Uterus (tissue), 4 donors: ENCODE measurements at regions of chr5 and their contacts with region 1.

Region 1: GRCh38 chr5:154754460-154755360 is 467 bp upstream of the LARP1 start:
- DNase-seq: peak; percentile 100
- H3K4me3 ChIP-seq: peak overlapping the region; percentile 83 to 97
- H3K27ac ChIP-seq: peak overlapping the region; percentile 96 to 99
- H3K4me1 ChIP-seq: no peaks in the 10 kb centered on the region
- H3K27me3 ChIP-seq: no peaks in the 10 kb centered on the region
- CTCF ChIP-seq: peak; percentile 20 to 55 (median 39)
- POLR2A ChIP-seq: peak; percentile 84 to 86

Region 2: GRCh38 chr5:154857530-154858296 is 103.0 kb after region 1 on chr5:
- intact Hi-C with region 1: loop called (anchors 5 kb)
- DNase-seq: peak; percentile 97 to 98
- H3K4me3 ChIP-seq: peak overlapping the region; percentile 82 to 90
- H3K27ac ChIP-seq: peak overlapping the region; percentile 98
- H3K4me1 ChIP-seq: peaks cover 4 to 5% of the 10 kb centered on the region in 2 donors
- H3K27me3 ChIP-seq: no peaks in the 10 kb centered on the region
- CTCF ChIP-seq: no peak
- POLR2A ChIP-seq: peak in 1 of 2 donors; percentile 85

Region 3: DNA sequence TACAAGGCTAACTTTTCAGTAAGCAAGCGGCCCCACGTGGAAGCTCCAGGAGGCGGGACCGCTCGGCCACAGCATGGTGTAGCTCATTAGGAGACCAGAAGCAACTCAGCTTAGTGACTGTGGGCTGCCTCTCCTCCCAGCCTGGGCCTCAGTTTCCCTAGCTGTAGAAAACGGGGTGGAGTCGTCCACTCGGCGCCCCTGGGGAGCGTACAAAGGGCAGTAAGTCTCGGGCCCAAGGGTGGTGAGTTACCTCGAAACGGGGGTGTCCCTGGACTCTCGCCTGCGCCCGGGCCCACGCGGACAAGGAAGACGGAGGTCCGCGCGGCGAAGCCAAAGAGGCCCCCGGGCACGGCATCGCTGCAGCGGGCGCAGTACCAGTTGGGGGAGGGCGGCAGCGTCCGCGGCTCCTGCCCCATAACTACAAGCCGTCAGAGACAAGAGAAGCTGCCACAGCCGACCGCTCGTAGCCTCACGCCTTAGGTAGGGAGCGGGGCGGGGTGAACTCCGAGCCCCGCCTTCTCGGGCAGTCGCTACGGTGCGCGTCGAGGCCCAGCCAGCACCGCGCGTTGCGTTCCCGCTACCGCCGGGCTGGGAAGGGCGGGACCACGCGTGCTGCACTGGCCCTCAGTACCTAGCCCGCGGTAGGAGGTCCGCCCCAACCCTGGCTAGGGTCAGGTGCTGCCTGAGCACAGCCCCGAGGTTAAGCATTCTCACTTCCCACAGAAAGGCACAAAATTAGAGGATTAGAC is 183.2 kb after region 1 on chr5 and contains the start of gene GEMIN5:
- intact Hi-C with region 1: loop called (anchors 10 kb)
- DNase-seq: peak; percentile 74 to 85
- H3K4me3 ChIP-seq: peak within 1 kb of the TSS; percentile 49 to 81
- H3K27ac ChIP-seq: peak within 1 kb of the TSS; percentile 48 to 79
- H3K4me1 ChIP-seq: peaks cover 0 to 9% of the 10 kb centered on the region in 2 donors
- H3K27me3 ChIP-seq: no peaks in the 10 kb centered on the region
- CTCF ChIP-seq: peak in 1 of 4 experiments; percentile 5
- POLR2A ChIP-seq: peak in 1 of 2 donors; percentile 54
- total RNA-seq, gene GEMIN5: 10.0 to 26.5 (median 19.3) TPM

Region 4: DNA sequence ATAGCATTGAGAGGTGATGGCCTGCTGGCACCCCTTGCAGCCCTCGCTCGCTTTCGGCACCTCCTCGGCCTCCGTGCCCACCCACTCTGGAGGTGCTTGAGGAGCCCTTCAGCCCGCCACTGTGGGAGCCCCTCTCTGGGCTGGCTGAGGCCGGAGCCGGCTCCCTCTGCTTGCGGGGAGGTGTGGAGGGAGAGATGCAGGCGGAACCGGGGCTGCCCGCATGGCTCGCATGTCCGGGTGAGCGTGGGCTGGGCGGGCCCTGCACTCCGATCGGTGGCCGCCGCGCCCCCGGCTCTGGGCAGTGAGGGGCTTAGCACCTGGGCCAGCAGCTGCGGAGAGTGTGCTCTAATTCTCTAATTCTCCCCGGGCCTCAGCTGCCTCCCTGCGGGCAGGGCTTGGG is 359.9 kb after region 1 on chr5:
- intact Hi-C with region 1: no loop called
- DNase-seq: no peak
- H3K4me3 ChIP-seq: no peak overlapping the region
- H3K27ac ChIP-seq: no peak overlapping the region
- H3K4me1 ChIP-seq: no peaks in the 10 kb centered on the region
- H3K27me3 ChIP-seq: no peaks in the 10 kb centered on the region
- CTCF ChIP-seq: no peak
- POLR2A ChIP-seq: no peak